ENCODE measurements at regions of chr1 and their contacts with region 1.

Region 1: GRCh38 chr1:1919304-1920056 is 401 bp upstream of the TMEM52 start:
- DNase-seq: peak; percentile 100
- ATAC-seq: peak; percentile 88
- H3K4me3 ChIP-seq: peak overlapping the region in 4 of 5 experiments; percentile 37 to 67 (median 60)
- H3K4me3 Mint-ChIP-seq: peak overlapping the region; percentile 79
- H3K27ac ChIP-seq: peak overlapping the region in 1 of 2 donors; percentile 51
- H3K27ac Mint-ChIP-seq: peak overlapping the region; percentile 62
- H3K4me1 ChIP-seq: peaks cover 12 to 22% of the 10 kb centered on the region in 2 donors
- H3K4me1 Mint-ChIP-seq: peaks cover 4% of the 10 kb centered on the region
- H3K27me3 ChIP-seq: peaks cover 0 to 18% (median 0%) of the 10 kb centered on the region in 4 experiments
- H3K27me3 Mint-ChIP-seq: peaks cover under 1% of the 10 kb centered on the region
- CTCF ChIP-seq: no peak

Region 2: GRCh38 chr1:1185101-1185765 is 734.2 kb before region 1 on chr1:
- CTCF ChIA-PET with region 1: no interaction called
- POLR2A ChIA-PET with region 1: no interaction called
- intact Hi-C with region 1: no loop called
- DNase-seq: no peak
- ATAC-seq: no peak
- H3K4me3 ChIP-seq: no peak overlapping the region
- H3K4me3 Mint-ChIP-seq: no peak overlapping the region
- H3K27ac ChIP-seq: no peak overlapping the region
- H3K27ac Mint-ChIP-seq: no peak overlapping the region
- H3K4me1 ChIP-seq: peaks cover 0 to 6% of the 10 kb centered on the region in 2 donors
- H3K4me1 Mint-ChIP-seq: peaks cover 17% of the 10 kb centered on the region
- H3K27me3 ChIP-seq: peaks cover 0 to 19% (median 8%) of the 10 kb centered on the region in 4 experiments
- H3K27me3 Mint-ChIP-seq: peaks cover 14% of the 10 kb centered on the region
- CTCF ChIP-seq: no peak

Region 3: GRCh38 chr1:1890506-1891348 is 28.8 kb before region 1 on chr1 and contains the start of gene GNB1:
- CTCF ChIA-PET with region 1: no interaction called
- POLR2A ChIA-PET with region 1: no interaction called
- intact Hi-C with region 1: loop called (anchors 1 kb)
- DNase-seq: peak; percentile 98
- ATAC-seq: peak; percentile 60
- H3K4me3 ChIP-seq: peak within 1 kb of the TSS; percentile 63 to 88 (median 79)
- H3K4me3 Mint-ChIP-seq: peak within 1 kb of the TSS; percentile 91
- H3K27ac ChIP-seq: peak within 1 kb of the TSS; percentile 72 to 86
- H3K27ac Mint-ChIP-seq: peak within 1 kb of the TSS; percentile 96
- H3K4me1 ChIP-seq: peaks cover 53 to 74% of the 10 kb centered on the region in 2 donors
- H3K4me1 Mint-ChIP-seq: peaks cover 60% of the 10 kb centered on the region
- H3K27me3 ChIP-seq: no peaks in the 10 kb centered on the region
- H3K27me3 Mint-ChIP-seq: no peaks in the 10 kb centered on the region
- CTCF ChIP-seq: no peak
- total RNA-seq, gene GNB1: 249 and 291 TPM in 2 replicates

Region 4: DNA sequence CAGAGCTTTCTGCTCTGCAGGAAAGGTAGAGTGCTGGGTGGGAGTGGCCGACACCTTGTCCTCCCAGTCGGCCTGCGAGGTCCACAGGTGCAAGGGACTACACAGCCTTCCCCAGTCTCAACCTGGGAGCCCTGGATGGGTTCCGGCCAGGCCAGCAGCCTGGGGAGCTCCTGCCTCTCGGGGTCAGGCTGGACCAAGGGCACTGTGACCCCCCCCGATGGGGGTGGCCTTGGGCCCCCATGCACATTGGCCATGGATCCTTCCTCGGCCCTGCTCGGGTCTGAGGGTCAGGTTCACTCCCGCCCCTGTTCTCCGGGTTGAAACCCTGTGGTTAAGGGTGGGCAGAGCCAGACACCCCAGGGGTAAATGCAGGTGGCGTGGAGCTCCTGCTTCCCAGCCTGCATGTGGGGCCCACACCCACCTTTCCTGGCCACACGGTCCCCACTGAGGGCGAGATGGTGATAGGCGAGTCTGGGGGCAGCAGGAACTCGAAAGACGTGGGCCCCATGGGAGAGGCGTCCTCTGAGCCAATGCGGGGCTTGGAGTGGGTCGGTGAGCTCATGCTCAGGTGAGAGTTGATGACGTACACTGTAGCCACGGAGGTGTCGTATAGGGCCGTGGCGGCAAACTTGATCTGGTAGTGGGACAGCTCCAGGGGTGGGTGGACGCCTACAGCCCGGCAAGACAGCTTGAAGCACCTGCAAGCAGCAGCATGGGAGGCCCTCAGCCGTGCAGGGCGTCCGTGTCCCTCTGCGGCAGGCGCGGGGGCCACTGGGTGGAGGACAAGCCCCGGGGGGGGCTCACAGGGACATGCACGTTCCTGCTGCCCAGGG is 10.4 kb after region 1 on chr1:
- CTCF ChIA-PET with region 1: no interaction called
- POLR2A ChIA-PET with region 1: no interaction called
- intact Hi-C with region 1: no loop called
- DNase-seq: no peak
- ATAC-seq: no peak
- H3K4me3 ChIP-seq: no peak overlapping the region
- H3K4me3 Mint-ChIP-seq: no peak overlapping the region
- H3K27ac ChIP-seq: no peak overlapping the region
- H3K27ac Mint-ChIP-seq: no peak overlapping the region
- H3K4me1 ChIP-seq: no peaks in the 10 kb centered on the region
- H3K4me1 Mint-ChIP-seq: no peaks in the 10 kb centered on the region
- H3K27me3 ChIP-seq: no peaks in the 10 kb centered on the region
- H3K27me3 Mint-ChIP-seq: peaks cover 2% of the 10 kb centered on the region
- CTCF ChIP-seq: no peak

Region 5: GRCh38 chr1:2049718-2050427 is 130.4 kb after region 1 on chr1 and contains the start of gene PRKCZ:
- CTCF ChIA-PET with region 1: no interaction called
- POLR2A ChIA-PET with region 1: no interaction called
- intact Hi-C with region 1: loop called (anchors 1 kb)
- DNase-seq: peak; percentile 95
- ATAC-seq: peak; percentile 97
- H3K4me3 ChIP-seq: peak within 1 kb of the TSS; percentile 12 to 90 (median 79)
- H3K4me3 Mint-ChIP-seq: peak within 1 kb of the TSS; percentile 81
- H3K27ac ChIP-seq: peak within 1 kb of the TSS; percentile 52 to 72
- H3K27ac Mint-ChIP-seq: peak within 1 kb of the TSS; percentile 75
- H3K4me1 ChIP-seq: peaks cover 22 to 33% of the 10 kb centered on the region in 2 donors
- H3K4me1 Mint-ChIP-seq: peaks cover 34% of the 10 kb centered on the region
- H3K27me3 ChIP-seq: peaks cover 0 to 36% (median 15%) of the 10 kb centered on the region in 4 experiments
- H3K27me3 Mint-ChIP-seq: peaks cover 9% of the 10 kb centered on the region
- CTCF ChIP-seq: no peak
- total RNA-seq, gene PRKCZ: 53.2 and 54.4 TPM in 2 replicates

Region 6: GRCh38 chr1:2133039-2133878 is 213.8 kb after region 1 on chr1:
- CTCF ChIA-PET with region 1: no interaction called
- POLR2A ChIA-PET with region 1: no interaction called
- intact Hi-C with region 1: loop called (anchors 5 kb)
- DNase-seq: peak; percentile 98
- ATAC-seq: peak; percentile 91
- H3K4me3 ChIP-seq: peak overlapping the region; percentile 16 to 64 (median 56)
- H3K4me3 Mint-ChIP-seq: peak overlapping the region; percentile 88
- H3K27ac ChIP-seq: peak overlapping the region; percentile 80 to 82
- H3K27ac Mint-ChIP-seq: peak overlapping the region; percentile 91
- H3K4me1 ChIP-seq: peaks cover 10 to 19% of the 10 kb centered on the region in 2 donors
- H3K4me1 Mint-ChIP-seq: peaks cover 23% of the 10 kb centered on the region
- H3K27me3 ChIP-seq: no peaks in the 10 kb centered on the region
- H3K27me3 Mint-ChIP-seq: no peaks in the 10 kb centered on the region
- CTCF ChIP-seq: no peak

Region 7: DNA sequence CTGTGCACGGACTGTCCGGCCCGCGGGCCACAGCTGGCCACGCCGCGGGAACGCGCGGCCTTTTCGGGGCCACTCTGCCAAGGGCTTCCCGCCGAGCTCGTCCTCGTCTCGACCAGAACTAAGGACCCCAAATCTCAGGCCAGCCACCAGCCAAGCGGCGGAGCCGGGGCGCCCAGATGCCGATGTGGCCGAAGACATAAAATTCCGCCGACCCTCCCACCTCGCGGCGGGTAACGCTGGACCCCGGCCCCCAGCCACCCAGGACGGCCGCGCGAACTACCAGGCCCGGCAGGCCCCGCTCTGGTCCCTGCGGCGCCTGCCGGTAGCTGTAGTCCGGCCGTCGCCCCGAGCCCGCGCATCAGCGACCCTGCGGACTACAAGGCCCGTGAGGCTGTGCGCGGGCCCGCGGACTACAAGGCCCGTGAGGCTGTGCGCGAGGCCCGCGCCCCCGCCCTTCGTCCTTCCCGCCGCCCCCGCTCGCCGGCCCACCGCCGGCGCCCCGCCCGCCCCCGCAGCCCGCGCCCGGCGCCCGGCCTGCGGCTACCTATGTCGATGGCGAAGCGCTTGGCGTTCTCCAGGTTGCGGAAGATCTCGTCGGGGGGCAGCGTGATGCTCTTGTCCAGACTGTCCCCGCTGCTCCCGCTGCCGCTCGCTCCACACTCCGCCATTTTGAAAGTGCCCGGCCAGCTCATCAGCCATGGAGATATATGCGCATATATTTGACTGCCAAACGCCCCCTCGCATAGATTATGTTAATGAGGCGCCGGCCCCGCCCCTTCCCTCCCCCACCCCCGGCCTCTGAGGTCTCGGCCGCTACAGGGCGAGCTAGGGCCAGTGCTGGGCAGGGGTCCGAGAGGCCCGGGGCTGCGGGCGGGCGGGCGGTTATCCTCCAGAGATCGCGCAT is 606.7 kb after region 1 on chr1 and contains the start of gene PANK4:
- CTCF ChIA-PET with region 1: no interaction called
- POLR2A ChIA-PET with region 1: no interaction called
- intact Hi-C with region 1: loop called (anchors 5 kb)
- DNase-seq: peak; percentile 94
- ATAC-seq: peak; percentile 91
- H3K4me3 ChIP-seq: peak within 1 kb of the TSS; percentile 48 to 96 (median 74)
- H3K4me3 Mint-ChIP-seq: peak within 1 kb of the TSS; percentile 96
- H3K27ac ChIP-seq: peak within 1 kb of the TSS; percentile 41 to 78
- H3K27ac Mint-ChIP-seq: peak within 1 kb of the TSS; percentile 85
- H3K4me1 ChIP-seq: peaks cover 41 to 53% of the 10 kb centered on the region in 2 donors
- H3K4me1 Mint-ChIP-seq: peaks cover 43% of the 10 kb centered on the region
- H3K27me3 ChIP-seq: peaks cover 0 to 24% (median 10%) of the 10 kb centered on the region in 4 experiments
- H3K27me3 Mint-ChIP-seq: no peaks in the 10 kb centered on the region
- CTCF ChIP-seq: no peak
- total RNA-seq, gene PANK4: 80.5 and 86.3 TPM in 2 replicates